ENCODE measurements at regions of chr6 and their contacts with region 1.

Region 1: GRCh38 chr6:169723200-169723909 is 945 bp downstream of the PHF10 start:
- DNase-seq: peak; percentile 79 to 90 (median 86)
- H3K4me3 ChIP-seq: peak overlapping the region; percentile 76 to 89 (median 82)
- H3K27ac ChIP-seq: peak overlapping the region; percentile 66 to 87
- H3K4me1 ChIP-seq: peaks cover 13 to 38% (median 27%) of the 10 kb centered on the region in 4 experiments
- H3K27me3 ChIP-seq: no peaks in the 10 kb centered on the region

Region 2: GRCh38 chr6:169701954-169702839 is 21.2 kb before region 1 on chr6 and contains the starts of genes C6orf120 and WDR27:
- CTCF ChIA-PET with region 1: interaction called, 13 read pairs
- POLR2A ChIA-PET with region 1: interaction called, 17 read pairs
- DNase-seq: peak; percentile 97 to 99 (median 99)
- H3K4me3 ChIP-seq: peak within 1 kb of the TSS; percentile 86 to 98 (median 92)
- H3K27ac ChIP-seq: peak within 1 kb of the TSS; percentile 75 to 91
- H3K4me1 ChIP-seq: peaks cover 15 to 32% (median 23%) of the 10 kb centered on the region in 4 experiments
- H3K27me3 ChIP-seq: no peaks in the 10 kb centered on the region

Region 3: DNA sequence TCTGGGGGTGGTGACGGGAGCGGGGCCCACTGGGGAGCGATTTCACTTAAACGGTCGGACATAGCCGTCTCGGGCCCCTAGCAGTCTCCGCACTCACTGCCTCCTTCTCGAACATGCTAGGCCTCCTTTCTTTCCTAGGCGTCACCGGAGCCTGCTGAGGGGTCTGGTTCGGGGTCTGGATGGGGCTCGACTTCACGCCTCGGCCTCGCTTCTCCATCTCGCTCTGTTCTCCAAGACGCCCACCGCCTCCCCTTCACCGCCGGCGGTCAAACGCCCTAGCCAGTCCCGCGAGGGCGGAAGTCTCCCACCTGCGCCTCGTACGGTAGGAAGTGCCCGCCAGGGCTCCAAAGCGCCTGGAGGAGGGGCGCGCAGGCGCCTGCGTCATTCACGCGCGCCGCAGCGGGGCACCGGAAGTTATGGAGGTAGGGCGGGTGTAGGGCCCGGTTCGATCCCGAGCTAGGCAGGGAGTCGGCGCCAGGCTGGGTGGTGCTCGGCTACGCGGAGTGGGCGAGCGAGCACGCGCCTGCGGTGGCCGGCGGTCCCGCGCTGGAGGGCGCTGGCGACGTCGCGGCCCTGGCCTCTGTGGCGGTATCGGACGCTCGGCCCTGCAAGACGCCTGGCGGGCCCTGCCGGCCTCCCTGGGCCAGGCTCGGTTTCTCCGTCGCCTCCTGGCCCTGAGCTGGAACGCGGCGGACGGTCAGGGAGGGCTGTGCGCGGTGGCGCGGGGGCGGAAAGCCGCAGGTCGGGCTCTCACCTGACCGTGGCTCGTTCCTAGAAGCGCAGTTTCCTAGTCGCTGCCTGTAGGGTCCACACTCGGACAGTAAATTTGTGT is 28.1 kb after region 1 on chr6 and contains the starts of genes DYNLT2 and ERMARD:
- CTCF ChIA-PET with region 1: interaction called, 6 read pairs
- POLR2A ChIA-PET with region 1: interaction called, 13 read pairs
- DNase-seq: peak; percentile 95 to 97 (median 96)
- H3K4me3 ChIP-seq: peak within 1 kb of the TSS; percentile 78 to 96 (median 91)
- H3K27ac ChIP-seq: peak within 1 kb of the TSS; percentile 94 to 97
- H3K4me1 ChIP-seq: peaks cover 10 to 25% (median 19%) of the 10 kb centered on the region in 4 experiments
- H3K27me3 ChIP-seq: no peaks in the 10 kb centered on the region

Measured in common myeloid progenitor, CD34-positive (primary cell).